Stomach (tissue), 19 donors: ENCODE measurements at regions of chr6 and their contacts with region 1.

Region 1: GRCh38 chr6:143575440-143575839 is 63.9 kb upstream of the FUCA2 start:
- DNase-seq: peak; percentile 37 to 92
- H3K4me3 ChIP-seq: no peak overlapping the region
- H3K27ac ChIP-seq: no peak overlapping the region
- H3K4me1 ChIP-seq: peaks cover 0 to 9% (median 3%) of the 10 kb centered on the region in 4 donors
- H3K27me3 ChIP-seq: no peaks in the 10 kb centered on the region
- CTCF ChIP-seq: peak in 5 of 7 experiments; percentile 71 to 90 (median 81)
- EP300 ChIP-seq: no peak
- POLR2A ChIP-seq: no peak

Region 2: GRCh38 chr6:143842902-143843676 is 267.6 kb after region 1 on chr6 and contains the start of gene LTV1:
- intact Hi-C with region 1: loop called (anchors 10 kb)
- DNase-seq: peak; percentile 96 to 99
- H3K4me3 ChIP-seq: peak within 1 kb of the TSS; percentile 71 to 87 (median 86)
- H3K27ac ChIP-seq: peak within 1 kb of the TSS; percentile 77 to 97 (median 93)
- H3K4me1 ChIP-seq: peaks cover 8 to 38% (median 28%) of the 10 kb centered on the region in 4 donors
- H3K27me3 ChIP-seq: no peaks in the 10 kb centered on the region
- CTCF ChIP-seq: peak in 1 of 7 experiments; percentile 15
- EP300 ChIP-seq: no peak
- POLR2A ChIP-seq: peak in 2 of 4 donors; percentile 34 to 63
- total RNA-seq, gene LTV1: 1.2 to 25.3 (median 14.1) TPM

Region 3: GRCh38 chr6:144013486-144013909 is 438.1 kb after region 1 on chr6:
- intact Hi-C with region 1: loop called (anchors 5 kb)
- DNase-seq: peak; percentile 85 to 92
- H3K4me3 ChIP-seq: no peak overlapping the region
- H3K27ac ChIP-seq: no peak overlapping the region
- H3K4me1 ChIP-seq: peaks cover 0 to 2% (median 0%) of the 10 kb centered on the region in 4 donors
- H3K27me3 ChIP-seq: peaks cover 0 to 6% (median 0%) of the 10 kb centered on the region in 3 donors
- CTCF ChIP-seq: peak in 5 of 7 experiments; percentile 76 to 88 (median 85)
- EP300 ChIP-seq: no peak
- POLR2A ChIP-seq: no peak